WTC11 (cell line): ENCODE measurements at regions of chr11 and their contacts with region 1.

Region 1: DNA sequence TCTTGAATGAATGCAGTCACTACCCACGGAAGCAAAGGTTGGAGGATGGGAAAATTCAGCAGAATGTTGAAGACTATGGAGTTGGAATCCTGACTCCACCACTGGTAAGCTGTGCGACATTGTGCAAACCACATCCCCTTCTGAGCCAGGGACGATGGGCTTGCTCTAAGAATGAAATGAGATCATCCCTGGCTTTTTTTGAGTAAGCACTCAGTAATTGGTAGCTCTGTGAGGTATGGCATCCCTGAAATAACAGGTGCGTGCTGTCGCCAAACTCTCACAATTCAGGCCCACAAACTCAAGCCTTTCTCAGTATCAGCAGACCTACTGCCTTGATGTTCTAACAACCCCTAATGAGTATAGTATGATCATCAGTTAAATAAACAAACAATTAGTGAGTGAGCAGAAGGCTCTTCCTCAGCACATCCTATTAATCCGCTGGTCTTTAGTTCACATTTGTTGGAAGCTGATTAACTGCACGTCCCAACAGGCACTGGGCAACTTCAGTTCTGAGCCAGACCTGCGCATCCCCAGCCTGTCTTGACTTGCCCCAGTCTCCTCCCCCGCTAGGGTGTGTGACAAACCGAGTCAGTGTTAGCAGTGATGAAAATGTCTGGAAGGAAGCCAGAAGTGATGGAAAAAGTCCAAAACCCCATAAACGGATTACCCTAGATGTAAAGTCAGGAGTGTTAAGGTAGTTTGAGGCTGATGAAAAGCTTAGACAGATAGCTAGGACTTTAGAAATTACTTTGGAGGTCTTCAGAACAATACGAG is 235.5 kb downstream of the GRIK4 start:
- DNase-seq: no peak
- ATAC-seq: no peak
- H3K4me3 Mint-ChIP-seq: no peak overlapping the region
- H3K27ac Mint-ChIP-seq: no peak overlapping the region
- H3K4me1 Mint-ChIP-seq: peaks cover 27% of the 10 kb centered on the region
- H3K27me3 Mint-ChIP-seq: peaks cover under 1% of the 10 kb centered on the region; the same call in 1 of the 2 replicates
- CTCF ChIP-seq: no peak

Region 2: GRCh38 chr11:120500414-120501071 is 246.5 kb before region 1 on chr11:
- CTCF ChIA-PET with region 1: no interaction called
- POLR2A ChIA-PET with region 1: no interaction called
- DNase-seq: no peak
- ATAC-seq: peak; percentile 41; the same call in 1 of the 2 replicates
- H3K4me3 Mint-ChIP-seq: no peak overlapping the region
- H3K27ac Mint-ChIP-seq: peak overlapping the region; percentile 21; the same call in 1 of the 2 replicates
- H3K4me1 Mint-ChIP-seq: peaks cover 65% of the 10 kb centered on the region
- H3K27me3 Mint-ChIP-seq: no peaks in the 10 kb centered on the region
- CTCF ChIP-seq: no peak

Region 3: DNA sequence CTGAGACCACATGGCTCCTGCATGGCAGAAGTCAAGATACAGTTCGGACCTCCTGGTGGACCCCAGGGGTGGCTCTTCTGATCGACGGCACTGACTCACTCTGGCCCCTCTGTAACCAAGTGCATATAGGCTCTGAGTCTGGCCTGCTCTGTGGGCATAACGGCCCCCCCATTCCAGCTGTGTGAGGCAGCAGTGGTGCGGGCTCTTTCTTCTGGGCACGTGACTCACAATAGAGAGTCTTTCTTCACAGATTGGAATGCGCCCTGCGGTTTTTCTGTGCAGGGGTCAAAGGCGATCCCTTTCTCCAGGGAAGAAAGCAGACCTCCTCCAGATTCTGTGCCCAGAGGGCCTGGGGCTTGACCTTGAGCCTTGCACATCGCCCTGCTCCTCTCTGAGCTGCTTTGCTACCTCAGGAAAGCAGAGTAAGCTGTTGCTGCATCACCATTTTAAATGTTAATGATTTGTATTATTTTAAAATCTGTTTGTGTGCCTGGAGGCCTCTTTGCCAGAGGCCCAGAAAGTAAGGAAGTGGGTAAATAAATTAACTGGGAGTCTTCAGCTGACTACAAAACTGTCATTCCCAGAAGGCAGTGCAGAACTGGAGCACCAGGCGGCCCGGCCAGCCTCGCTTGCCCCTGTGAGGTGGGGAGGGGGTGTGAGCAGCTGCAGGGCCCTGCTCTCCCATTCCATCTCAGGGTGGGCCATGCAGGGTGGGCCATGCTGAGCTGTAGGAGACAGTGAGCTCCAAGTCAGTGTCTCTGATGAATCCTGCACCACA is 36.5 kb before region 1 on chr11:
- CTCF ChIA-PET with region 1: interaction called, 15 read pairs
- POLR2A ChIA-PET with region 1: no interaction called
- DNase-seq: peak; percentile 60
- ATAC-seq: peak; percentile 76
- H3K4me3 Mint-ChIP-seq: no peak overlapping the region
- H3K27ac Mint-ChIP-seq: no peak overlapping the region; the same call in 1 of the 2 replicates
- H3K4me1 Mint-ChIP-seq: peaks cover 38% of the 10 kb centered on the region
- H3K27me3 Mint-ChIP-seq: no peaks in the 10 kb centered on the region; the same call in 1 of the 2 replicates
- CTCF ChIP-seq: no peak

Region 4: DNA sequence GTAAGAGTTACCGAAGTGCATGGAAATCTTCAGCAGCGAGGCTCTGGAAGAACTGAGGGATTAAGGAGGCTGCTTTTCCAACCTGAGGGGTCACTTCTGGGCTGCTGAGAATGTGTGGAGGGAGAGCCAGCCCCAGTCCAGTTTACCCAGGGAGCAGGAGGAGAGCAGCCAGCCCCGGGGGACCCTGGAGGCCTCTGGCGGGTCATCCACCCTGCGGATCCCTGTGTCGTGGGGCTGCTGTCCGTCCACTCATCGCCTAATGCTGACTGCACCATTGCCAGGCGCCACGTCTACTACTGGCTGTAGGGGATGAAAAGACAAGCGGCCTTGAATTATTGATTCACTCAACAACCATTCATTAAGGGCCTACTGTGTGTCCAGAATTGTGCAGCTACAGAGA is 48.2 kb after region 1 on chr11:
- CTCF ChIA-PET with region 1: no interaction called
- POLR2A ChIA-PET with region 1: interaction called, 12 read pairs
- DNase-seq: no peak
- ATAC-seq: no peak
- H3K4me3 Mint-ChIP-seq: no peak overlapping the region
- H3K27ac Mint-ChIP-seq: no peak overlapping the region
- H3K4me1 Mint-ChIP-seq: peaks cover 6% of the 10 kb centered on the region
- H3K27me3 Mint-ChIP-seq: peaks cover 8% of the 10 kb centered on the region
- CTCF ChIP-seq: no peak